Mammary epithelial cell (primary cell): ENCODE measurements at regions of chr2 and their contacts with region 1.

Region 1: DNA sequence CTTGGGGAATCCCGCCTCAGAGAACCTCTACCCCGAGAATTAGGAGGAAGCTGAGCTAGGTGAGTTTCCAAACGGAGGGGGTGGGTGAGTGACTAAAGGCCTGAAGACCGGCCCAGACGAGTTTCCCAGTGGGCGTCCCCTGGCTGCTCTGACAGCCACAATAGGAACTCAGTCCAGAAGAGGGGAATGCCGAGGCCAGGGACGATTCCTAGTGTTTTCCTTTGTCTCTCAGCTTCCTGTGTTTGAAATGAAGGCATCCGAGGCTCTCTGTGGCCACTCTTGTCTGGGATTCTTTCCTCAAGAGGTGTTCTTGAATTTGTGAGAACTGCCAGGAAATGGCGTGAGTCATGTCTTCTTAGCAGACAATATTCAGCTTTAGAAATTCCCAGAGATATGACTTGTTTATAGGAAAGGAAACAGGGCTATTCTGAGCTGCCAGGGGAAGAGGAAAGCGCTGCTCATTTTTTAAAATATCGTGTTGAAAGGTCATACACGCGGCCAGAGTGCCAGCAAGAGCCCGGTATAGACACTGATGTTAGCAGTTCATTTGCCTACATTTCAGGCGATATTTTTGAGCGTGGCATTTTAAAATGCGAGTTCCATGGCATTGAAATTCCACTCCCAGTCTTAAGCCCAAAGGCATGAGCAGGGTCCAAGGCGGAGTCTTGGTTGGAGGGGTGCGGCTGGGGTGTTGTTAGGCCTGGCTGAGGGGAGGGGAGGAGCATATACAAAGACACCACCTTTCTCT is 169.1 kb upstream of the KLF7 start:
- DNase-seq: peak; percentile 99
- H3K4me3 ChIP-seq: peak overlapping the region; percentile 3 to 26 (median 20)
- H3K27ac ChIP-seq: peak overlapping the region; percentile 99
- H3K4me1 ChIP-seq: peaks cover 87% of the 10 kb centered on the region
- H3K27me3 ChIP-seq: no peaks in the 10 kb centered on the region
- CTCF ChIP-seq: no peak

Region 2: DNA sequence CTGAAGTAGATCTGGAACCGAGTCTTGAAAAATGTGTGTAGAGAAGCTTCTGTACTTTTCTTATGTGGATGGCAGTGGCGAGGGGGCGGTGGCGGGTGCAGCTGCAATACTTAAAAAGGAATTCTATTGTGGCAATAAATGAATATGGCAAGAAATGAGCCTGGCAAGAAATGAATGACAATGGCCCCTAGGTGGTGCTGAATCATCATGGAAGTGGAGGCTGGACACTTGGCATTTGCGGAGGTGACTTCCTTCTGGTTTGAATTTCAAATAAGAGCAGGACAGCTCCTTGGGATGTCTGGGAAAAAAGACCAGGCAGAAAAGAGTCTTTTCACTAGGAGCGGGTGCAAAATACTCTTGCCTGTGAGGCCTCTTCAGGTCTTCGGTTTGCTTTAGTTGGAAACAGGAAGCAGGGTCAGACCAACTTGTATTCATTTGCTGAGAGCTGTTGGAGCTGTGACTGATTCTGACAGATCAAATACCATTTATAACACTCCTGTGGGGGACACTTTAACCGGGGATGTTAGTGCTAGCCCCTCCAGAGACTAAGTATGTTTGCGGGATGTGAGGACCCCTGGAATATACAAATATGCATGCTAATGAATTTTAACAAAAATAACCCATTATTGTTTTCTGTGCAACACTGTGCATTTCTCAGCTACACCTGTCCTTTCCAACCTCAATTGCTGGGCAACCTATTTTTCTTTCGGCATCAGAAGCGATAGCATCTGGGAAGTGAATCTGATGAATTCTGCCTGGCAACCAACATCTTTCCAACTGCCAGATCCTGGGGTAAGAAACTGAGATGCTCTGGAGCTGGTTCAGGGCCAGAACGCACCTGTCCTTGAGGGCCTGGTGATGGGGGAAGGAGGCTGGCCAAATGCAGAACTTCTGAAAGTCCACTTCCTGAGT is 534.0 kb before region 1 on chr2:
- CTCF ChIA-PET with region 1: no interaction called
- dilution Hi-C with region 1: no loop called
- in situ Hi-C with region 1: no loop called
- intact Hi-C with region 1: loop called (anchors 5 kb)
- DNase-seq: peak; percentile 69
- H3K4me3 ChIP-seq: no peak overlapping the region
- H3K27ac ChIP-seq: no peak overlapping the region
- H3K4me1 ChIP-seq: no peaks in the 10 kb centered on the region
- H3K27me3 ChIP-seq: no peaks in the 10 kb centered on the region
- CTCF ChIP-seq: peak; percentile 66 to 75

Region 3: GRCh38 chr2:207238831-207239701 is 95.7 kb before region 1 on chr2:
- CTCF ChIA-PET with region 1: no interaction called
- dilution Hi-C with region 1: loop called (anchors 5 kb)
- in situ Hi-C with region 1: no loop called
- intact Hi-C with region 1: loop called (anchors 1 kb)
- DNase-seq: peak; percentile 100
- H3K4me3 ChIP-seq: peak overlapping the region; percentile 31 to 84 (median 78)
- H3K27ac ChIP-seq: peak overlapping the region; percentile 100
- H3K4me1 ChIP-seq: peaks cover 51% of the 10 kb centered on the region
- H3K27me3 ChIP-seq: no peaks in the 10 kb centered on the region
- CTCF ChIP-seq: no peak

Region 4: GRCh38 chr2:207254591-207255464 is 80.0 kb before region 1 on chr2:
- CTCF ChIA-PET with region 1: no interaction called
- dilution Hi-C with region 1: no loop called
- in situ Hi-C with region 1: no loop called
- intact Hi-C with region 1: loop called (anchors 2 kb)
- DNase-seq: peak; percentile 54
- H3K4me3 ChIP-seq: peak overlapping the region in 2 of 3 experiments; percentile 8 to 15
- H3K27ac ChIP-seq: peak overlapping the region; percentile 86
- H3K4me1 ChIP-seq: peaks cover 90% of the 10 kb centered on the region
- H3K27me3 ChIP-seq: no peaks in the 10 kb centered on the region
- CTCF ChIP-seq: no peak

Region 5: GRCh38 chr2:207311316-207312005 is 23.3 kb before region 1 on chr2:
- CTCF ChIA-PET with region 1: no interaction called
- dilution Hi-C with region 1: no loop called
- in situ Hi-C with region 1: no loop called
- intact Hi-C with region 1: loop called (anchors 2 kb)
- DNase-seq: peak; percentile 90
- H3K4me3 ChIP-seq: no peak overlapping the region
- H3K27ac ChIP-seq: peak overlapping the region; percentile 46
- H3K4me1 ChIP-seq: peaks cover 19% of the 10 kb centered on the region
- H3K27me3 ChIP-seq: no peaks in the 10 kb centered on the region
- CTCF ChIP-seq: peak in 1 of 2 donors; percentile 37

Region 6: GRCh38 chr2:207394812-207395534 is 60.2 kb after region 1 on chr2:
- CTCF ChIA-PET with region 1: no interaction called
- dilution Hi-C with region 1: no loop called
- in situ Hi-C with region 1: no loop called
- intact Hi-C with region 1: loop called (anchors 1 kb)
- DNase-seq: peak; percentile 100
- H3K4me3 ChIP-seq: no peak overlapping the region
- H3K27ac ChIP-seq: peak overlapping the region; percentile 98
- H3K4me1 ChIP-seq: peaks cover 36% of the 10 kb centered on the region
- H3K27me3 ChIP-seq: no peaks in the 10 kb centered on the region
- CTCF ChIP-seq: no peak

Region 7: DNA sequence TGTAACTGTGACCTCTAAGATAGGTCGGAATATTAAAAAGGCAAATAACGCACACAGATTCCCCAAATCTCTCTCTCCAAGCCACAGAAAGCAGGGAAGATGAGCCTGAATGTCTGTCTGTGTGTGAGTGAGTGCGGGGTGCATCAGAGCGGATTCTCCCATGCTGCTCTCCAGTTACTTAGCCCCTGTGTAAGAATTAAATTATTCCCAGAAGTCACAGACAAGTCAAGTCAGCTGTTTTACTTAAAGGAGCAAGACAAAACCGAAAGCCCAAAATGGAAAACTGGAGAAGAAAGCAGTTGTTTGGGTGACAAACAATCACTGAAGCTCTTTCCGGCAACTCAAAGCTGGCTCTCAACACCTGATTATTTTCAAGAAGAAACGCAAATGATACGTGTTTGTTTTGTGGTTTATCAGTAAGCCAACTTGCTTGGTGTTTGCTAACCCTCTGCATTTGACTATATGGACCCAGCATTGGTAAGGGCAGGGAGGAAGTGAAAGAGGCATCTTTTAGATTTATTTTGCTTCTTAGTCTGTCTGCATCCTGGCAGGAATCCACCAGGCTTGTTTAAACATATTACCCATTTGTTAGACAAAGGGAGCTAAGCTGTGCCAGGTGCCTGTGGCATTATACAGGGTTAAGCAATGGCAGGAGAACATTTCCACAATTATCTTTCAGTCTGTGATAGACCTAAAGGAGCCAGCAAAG is 73.4 kb after region 1 on chr2:
- CTCF ChIA-PET with region 1: no interaction called
- dilution Hi-C with region 1: no loop called
- in situ Hi-C with region 1: no loop called
- intact Hi-C with region 1: loop called (anchors 5 kb)
- DNase-seq: peak; percentile 88
- H3K4me3 ChIP-seq: no peak overlapping the region
- H3K27ac ChIP-seq: peak overlapping the region; percentile 64
- H3K4me1 ChIP-seq: peaks cover 28% of the 10 kb centered on the region
- H3K27me3 ChIP-seq: no peaks in the 10 kb centered on the region
- CTCF ChIP-seq: no peak

Region 8: DNA sequence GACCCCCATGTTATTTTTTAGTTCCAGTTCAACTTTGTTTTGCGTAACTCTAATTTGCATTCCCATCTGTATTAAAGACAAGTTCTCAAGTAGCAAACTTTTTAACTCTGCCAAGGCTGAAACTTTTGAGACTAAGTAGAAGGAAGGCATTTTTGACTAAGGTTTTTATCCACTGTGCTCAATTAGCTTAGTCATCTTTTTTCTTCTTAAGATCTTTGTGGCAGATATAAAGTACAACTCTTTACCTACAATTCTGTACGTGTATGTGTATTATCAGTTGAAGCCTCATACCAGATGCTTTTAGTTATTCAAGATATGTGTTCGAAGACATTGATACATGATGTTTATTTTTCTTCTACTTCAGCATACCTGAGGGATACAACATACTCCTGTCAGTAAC is 236.6 kb after region 1 on chr2:
- CTCF ChIA-PET with region 1: no interaction called
- dilution Hi-C with region 1: no loop called
- in situ Hi-C with region 1: no loop called
- intact Hi-C with region 1: no loop called
- DNase-seq: no peak
- H3K4me3 ChIP-seq: no peak overlapping the region
- H3K27ac ChIP-seq: no peak overlapping the region
- H3K4me1 ChIP-seq: no peaks in the 10 kb centered on the region
- H3K27me3 ChIP-seq: no peaks in the 10 kb centered on the region
- CTCF ChIP-seq: no peak

Region 9: DNA sequence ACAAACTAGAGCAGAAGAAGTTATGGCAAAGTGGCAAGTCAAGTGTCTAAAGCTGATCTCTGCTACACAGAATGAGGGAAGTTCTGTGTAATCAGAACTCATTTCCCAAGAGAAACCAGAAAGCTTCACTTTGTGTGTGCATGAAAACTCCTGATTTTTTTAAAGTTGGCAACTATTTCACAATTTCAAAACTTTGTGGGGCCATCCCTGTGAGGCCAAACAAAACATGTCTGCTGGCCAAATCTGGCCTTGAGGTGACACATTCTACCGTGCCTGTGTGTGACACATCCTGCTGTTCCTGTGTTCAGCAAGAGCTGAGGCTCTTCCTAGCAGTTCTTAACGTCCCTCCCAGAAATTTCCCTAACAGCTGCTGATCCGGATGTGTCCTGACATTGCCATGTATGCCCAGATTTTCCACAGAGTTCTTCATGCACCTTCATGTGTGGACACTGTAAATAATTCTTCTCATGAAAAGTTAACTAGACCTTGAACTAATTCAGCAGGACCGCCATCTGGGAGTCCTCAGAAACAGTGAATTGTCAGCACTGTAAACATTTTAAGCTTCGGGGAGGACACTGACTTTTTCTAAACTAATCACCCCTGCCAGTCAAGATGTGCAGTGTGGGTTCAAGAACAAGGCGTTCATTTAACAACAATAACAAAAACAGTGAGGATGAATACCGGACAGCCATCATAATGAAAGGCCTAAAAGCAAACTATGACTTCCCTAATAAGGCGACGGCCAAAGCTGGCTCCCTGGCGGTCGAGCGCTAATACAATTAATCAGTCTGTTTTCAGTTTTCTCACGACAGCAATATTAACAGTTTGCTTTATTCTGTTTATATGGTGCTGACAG is 591.6 kb after region 1 on chr2:
- CTCF ChIA-PET with region 1: no interaction called
- dilution Hi-C with region 1: no loop called
- in situ Hi-C with region 1: no loop called
- intact Hi-C with region 1: no loop called
- DNase-seq: peak; percentile 60
- H3K4me3 ChIP-seq: no peak overlapping the region
- H3K27ac ChIP-seq: no peak overlapping the region
- H3K4me1 ChIP-seq: no peaks in the 10 kb centered on the region
- H3K27me3 ChIP-seq: no peaks in the 10 kb centered on the region
- CTCF ChIP-seq: no peak